HepG2 (cell line): ENCODE measurements at regions of chr18 and their contacts with region 1.

Region 1: GRCh38 chr18:62186774-62187542 is at the starts of genes PIGN and RELCH:
- DNase-seq: peak; percentile 98
- ATAC-seq: peak; percentile 93
- H3K4me3 ChIP-seq: peak within 1 kb of the TSS; percentile 92 to 99 (median 97)
- H3K27ac ChIP-seq: peak within 1 kb of the TSS; percentile 89
- H3K4me1 ChIP-seq: peaks cover 45% of the 10 kb centered on the region
- H3K27me3 ChIP-seq: no peaks in the 10 kb centered on the region; a peak in 1 of 5 replicates
- CTCF ChIP-seq: no peak
- EP300 ChIP-seq: no peak
- POLR2A ChIP-seq: peak; percentile 85 to 88
- RAD21 ChIP-seq: 0 out of 2 replicates have a peak, but pooled peaks have one; percentile 14
- total RNA-seq, gene PIGN: 33.6 and 33.8 TPM in 2 replicates
- total RNA-seq, gene RELCH: 31.7 and 37.7 TPM in 2 replicates

Region 2: GRCh38 chr18:62209046-62209445 is 22.1 kb after region 1 on chr18:
- CTCF ChIA-PET with region 1: no interaction called
- POLR2A ChIA-PET with region 1: no interaction called
- in situ Hi-C with region 1: no loop called
- intact Hi-C with region 1: no loop called
- DNase-seq: no peak
- ATAC-seq: no peak
- H3K4me3 ChIP-seq: no peak overlapping the region
- H3K27ac ChIP-seq: no peak overlapping the region
- H3K4me1 ChIP-seq: 0 out of 2 replicates have a peak, but pooled peaks cover 5% of the 10 kb centered on the region
- H3K27me3 ChIP-seq: no peaks in the 10 kb centered on the region
- CTCF ChIP-seq: no peak
- EP300 ChIP-seq: no peak
- POLR2A ChIP-seq: no peak
- RAD21 ChIP-seq: no peak

Region 3: GRCh38 chr18:62242955-62243354 is 56.0 kb after region 1 on chr18:
- CTCF ChIA-PET with region 1: interaction called, 33 read pairs
- POLR2A ChIA-PET with region 1: no interaction called
- in situ Hi-C with region 1: loop called (anchors 5 kb)
- intact Hi-C with region 1: no loop called
- DNase-seq: no peak
- ATAC-seq: no peak
- H3K4me3 ChIP-seq: no peak overlapping the region
- H3K27ac ChIP-seq: no peak overlapping the region
- H3K4me1 ChIP-seq: no peaks in the 10 kb centered on the region
- H3K27me3 ChIP-seq: no peaks in the 10 kb centered on the region
- CTCF ChIP-seq: no peak
- EP300 ChIP-seq: no peak
- POLR2A ChIP-seq: no peak
- RAD21 ChIP-seq: no peak

Region 4: DNA sequence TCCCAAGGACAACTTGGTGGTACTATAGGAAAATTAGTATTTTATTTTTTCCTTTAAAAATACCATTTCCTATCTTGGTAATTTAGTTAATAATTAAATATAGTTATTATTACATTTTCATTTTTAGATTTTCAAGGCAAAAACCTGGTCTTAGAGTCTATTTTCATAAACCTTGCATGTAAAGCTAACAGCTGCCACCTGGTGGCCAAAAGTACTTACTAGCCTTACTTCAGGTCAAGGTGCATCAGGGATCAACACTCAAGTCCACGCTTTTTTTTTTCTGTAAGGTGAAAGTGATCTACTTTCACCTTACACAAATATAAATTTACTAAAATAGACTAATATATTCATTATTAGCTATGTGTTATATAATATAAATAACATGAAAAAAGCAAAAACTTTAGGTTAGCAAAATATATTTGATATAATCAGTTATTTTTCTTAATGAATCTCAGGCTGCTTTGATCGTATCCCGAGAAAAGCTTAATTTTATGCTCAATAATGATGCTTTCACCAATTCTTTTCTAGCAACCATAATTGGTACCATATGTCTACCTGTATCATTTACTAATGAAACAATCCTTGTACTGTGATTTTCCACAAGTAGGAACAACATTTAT is 62.6 kb after region 1 on chr18:
- CTCF ChIA-PET with region 1: interaction called, 33 read pairs
- POLR2A ChIA-PET with region 1: interaction called, 10 read pairs
- in situ Hi-C with region 1: loop called (anchors 5 kb)
- intact Hi-C with region 1: loop called (anchors 1 kb)
- DNase-seq: peak; percentile 78
- ATAC-seq: peak; percentile 59; the same call in 1 of the 3 replicates
- H3K4me3 ChIP-seq: no peak overlapping the region
- H3K27ac ChIP-seq: no peak overlapping the region
- H3K4me1 ChIP-seq: peaks cover 7% of the 10 kb centered on the region
- H3K27me3 ChIP-seq: no peaks in the 10 kb centered on the region
- CTCF ChIP-seq: peak; percentile 72
- EP300 ChIP-seq: no peak
- POLR2A ChIP-seq: no peak
- RAD21 ChIP-seq: no peak

Region 5: GRCh38 chr18:62281684-62282083 is 94.7 kb after region 1 on chr18:
- CTCF ChIA-PET with region 1: no interaction called
- POLR2A ChIA-PET with region 1: no interaction called
- in situ Hi-C with region 1: no loop called
- intact Hi-C with region 1: no loop called
- DNase-seq: no peak
- ATAC-seq: no peak
- H3K4me3 ChIP-seq: no peak overlapping the region
- H3K27ac ChIP-seq: no peak overlapping the region
- H3K4me1 ChIP-seq: peaks cover 6% of the 10 kb centered on the region; the same call in 1 of the 2 replicates
- H3K27me3 ChIP-seq: no peaks in the 10 kb centered on the region; a peak in 1 of 5 replicates
- CTCF ChIP-seq: no peak
- EP300 ChIP-seq: no peak
- POLR2A ChIP-seq: no peak
- RAD21 ChIP-seq: no peak

Region 6: DNA sequence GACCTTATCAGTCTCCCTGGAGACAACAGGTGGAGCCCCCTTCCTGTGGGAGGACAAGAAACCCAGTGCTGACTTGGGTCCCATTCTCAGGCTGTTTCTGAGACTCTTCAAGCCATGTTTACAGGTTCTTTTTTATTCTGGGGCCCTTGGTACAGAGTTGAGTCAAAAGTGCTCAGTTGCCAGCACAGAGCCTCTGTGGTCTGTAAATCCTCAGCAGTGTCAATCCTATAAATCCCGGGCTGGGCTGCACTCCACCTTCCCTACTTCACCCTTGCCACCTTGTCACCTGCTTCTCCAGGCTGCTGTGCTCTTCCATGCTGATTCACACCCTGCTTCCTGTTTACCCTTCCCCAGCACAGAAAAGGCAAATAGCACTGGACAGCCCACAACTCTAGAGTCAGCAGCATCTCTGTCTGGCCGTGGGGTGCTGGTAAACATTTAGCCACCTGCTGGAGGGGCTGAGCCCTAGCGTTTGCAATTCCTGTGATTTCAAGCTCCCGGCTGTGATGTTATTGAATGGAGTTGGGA is 212.9 kb after region 1 on chr18:
- CTCF ChIA-PET with region 1: no interaction called
- POLR2A ChIA-PET with region 1: no interaction called
- in situ Hi-C with region 1: no loop called
- intact Hi-C with region 1: loop called (anchors 2 kb)
- DNase-seq: peak; percentile 79
- ATAC-seq: peak; percentile 95
- H3K4me3 ChIP-seq: peak overlapping the region in 1 of 3 experiments; percentile 34; a peak in 2 of 6 replicates
- H3K27ac ChIP-seq: no peak overlapping the region
- H3K4me1 ChIP-seq: peaks cover 47% of the 10 kb centered on the region
- H3K27me3 ChIP-seq: no peaks in the 10 kb centered on the region
- CTCF ChIP-seq: peak; percentile 75
- EP300 ChIP-seq: peak in 1 of 2 experiments; percentile 52; a peak in 1 of 4 replicates
- POLR2A ChIP-seq: no peak
- RAD21 ChIP-seq: no peak; the same call in 1 of the 2 replicates